ENCODE measurements at regions of chr20 and their contacts with region 1.

Region 1: DNA sequence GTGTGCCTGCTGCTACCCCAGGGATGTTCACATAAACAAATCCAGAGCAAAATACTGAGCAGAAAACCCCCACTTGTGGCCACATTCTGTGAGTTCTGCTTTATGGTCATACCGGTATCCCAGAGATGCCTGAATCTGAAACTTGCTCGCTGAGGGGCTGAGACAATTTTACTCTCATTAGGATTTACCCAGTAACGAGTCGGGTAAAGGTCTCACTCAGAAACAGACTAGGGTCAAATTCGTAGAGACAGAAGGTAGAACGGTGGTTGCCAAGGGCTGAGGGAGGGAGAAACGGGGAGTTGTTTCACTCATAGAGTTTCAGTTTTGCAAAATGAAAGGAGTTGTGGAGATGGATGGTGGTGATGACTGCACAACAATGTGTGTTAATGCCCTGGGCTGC is 45.4 kb upstream of the NKX2-2 start:
- DNase-seq: peak in 2 of 14 experiments; percentile 14 to 37
- ATAC-seq: no peak
- H3K4me3 ChIP-seq: peak overlapping the region; percentile 25
- H3K4me3 Mint-ChIP-seq: peak overlapping the region; percentile 31
- H3K27ac ChIP-seq: no peak overlapping the region
- H3K27ac Mint-ChIP-seq: peak overlapping the region; percentile 46
- H3K4me1 ChIP-seq: peaks cover 33% of the 10 kb centered on the region
- H3K4me1 Mint-ChIP-seq: peaks cover 48% of the 10 kb centered on the region
- H3K27me3 ChIP-seq: no peaks in the 10 kb centered on the region
- H3K27me3 Mint-ChIP-seq: peaks cover 13% of the 10 kb centered on the region
- CTCF ChIP-seq: no peak

Region 2: DNA sequence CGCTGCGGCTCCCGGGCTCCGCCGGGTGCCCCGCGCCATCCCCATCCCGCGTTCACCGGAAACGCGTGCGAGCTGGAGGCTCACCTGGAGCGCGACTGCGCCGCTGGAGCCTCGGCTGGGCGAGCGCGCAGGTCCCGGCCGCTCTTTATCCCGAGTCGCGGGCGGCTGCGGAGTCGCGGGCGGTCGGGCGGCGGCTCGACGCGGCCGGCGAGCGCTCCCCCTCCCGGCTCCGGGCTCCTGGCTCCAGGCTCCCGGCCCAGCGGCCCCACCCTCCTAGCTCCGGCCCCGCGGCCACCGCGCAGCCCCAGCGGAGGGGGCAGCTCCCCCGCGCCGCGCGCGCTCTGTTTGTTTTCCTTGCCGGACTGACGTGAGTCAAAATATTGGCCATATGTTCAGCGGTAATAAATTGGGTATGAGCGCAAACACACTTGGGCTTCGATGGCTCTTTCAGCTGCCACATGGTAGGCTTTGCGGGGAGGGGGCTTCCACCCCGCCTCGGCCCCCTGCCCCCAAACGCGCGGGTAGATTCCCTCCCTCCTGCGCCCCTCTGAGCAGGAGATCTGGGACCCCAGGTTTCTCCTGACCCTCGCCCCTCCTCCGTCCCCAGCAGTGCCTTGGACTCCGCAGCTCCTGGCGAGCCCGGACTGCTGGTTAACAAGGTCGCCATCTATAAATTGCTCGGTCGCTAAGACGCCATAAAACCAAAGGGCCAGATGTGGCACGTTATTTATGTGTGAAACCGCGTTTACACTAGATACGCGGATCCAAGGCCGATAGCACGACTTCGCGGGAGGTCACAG is 36.6 kb before region 1 on chr20:
- CTCF ChIA-PET with region 1: no interaction called
- POLR2A ChIA-PET with region 1: no interaction called
- intact Hi-C with region 1: no loop called
- DNase-seq: no peak
- ATAC-seq: no peak
- H3K4me3 ChIP-seq: no peak overlapping the region
- H3K4me3 Mint-ChIP-seq: peak overlapping the region; percentile 54
- H3K27ac ChIP-seq: no peak overlapping the region
- H3K27ac Mint-ChIP-seq: no peak overlapping the region
- H3K4me1 ChIP-seq: peaks cover 33% of the 10 kb centered on the region
- H3K4me1 Mint-ChIP-seq: peaks cover 26% of the 10 kb centered on the region
- H3K27me3 ChIP-seq: peaks cover 70 to 89% of the 10 kb centered on the region in 2 experiments
- H3K27me3 Mint-ChIP-seq: peaks cover 90% of the 10 kb centered on the region
- CTCF ChIP-seq: no peak

Region 3: GRCh38 chr20:21548390-21549035 is 10.8 kb before region 1 on chr20:
- CTCF ChIA-PET with region 1: no interaction called
- POLR2A ChIA-PET with region 1: interaction called, 24 read pairs
- intact Hi-C with region 1: no loop called
- DNase-seq: peak in 10 of 14 experiments; percentile 10 to 89 (median 48)
- ATAC-seq: peak; percentile 87
- H3K4me3 ChIP-seq: peak overlapping the region; percentile 15
- H3K4me3 Mint-ChIP-seq: peak overlapping the region; percentile 58
- H3K27ac ChIP-seq: peak overlapping the region; percentile 20 to 60
- H3K27ac Mint-ChIP-seq: peak overlapping the region; percentile 90
- H3K4me1 ChIP-seq: peaks cover 27% of the 10 kb centered on the region
- H3K4me1 Mint-ChIP-seq: peaks cover 41% of the 10 kb centered on the region
- H3K27me3 ChIP-seq: no peaks in the 10 kb centered on the region
- H3K27me3 Mint-ChIP-seq: no peaks in the 10 kb centered on the region
- CTCF ChIP-seq: no peak

Region 4: DNA sequence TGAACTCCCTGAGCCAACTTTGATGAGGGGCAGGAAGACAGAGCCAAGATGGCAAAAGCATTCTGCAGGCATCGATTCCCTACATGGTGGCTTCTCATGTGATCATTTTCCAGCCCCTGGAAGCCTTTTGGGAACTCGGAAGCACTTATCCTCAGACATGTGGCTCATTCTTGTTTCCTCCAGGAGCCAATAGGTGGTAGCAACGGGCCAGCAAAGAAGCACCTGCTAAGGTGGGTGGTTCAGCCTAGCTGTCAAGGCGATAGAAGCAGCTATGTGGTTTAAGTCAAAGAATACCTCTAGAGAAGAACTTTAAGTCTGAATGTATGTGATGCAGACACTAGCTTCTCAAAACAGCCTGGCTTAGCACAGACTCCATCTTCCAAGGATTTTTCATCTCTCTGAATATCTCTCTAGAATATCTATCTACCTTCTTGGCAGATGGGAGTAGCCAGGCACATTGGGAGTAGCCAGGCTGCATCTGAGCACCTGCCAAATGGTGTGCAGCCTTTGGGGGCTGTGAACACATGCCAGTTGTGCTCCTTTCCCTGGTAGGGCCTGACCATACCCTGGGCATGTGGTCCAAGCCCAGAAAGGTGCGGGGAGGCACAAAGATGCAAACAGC is 81.4 kb after region 1 on chr20:
- CTCF ChIA-PET with region 1: no interaction called
- POLR2A ChIA-PET with region 1: no interaction called
- intact Hi-C with region 1: no loop called
- DNase-seq: no peak
- ATAC-seq: no peak
- H3K4me3 ChIP-seq: no peak overlapping the region
- H3K4me3 Mint-ChIP-seq: no peak overlapping the region
- H3K27ac ChIP-seq: no peak overlapping the region
- H3K27ac Mint-ChIP-seq: no peak overlapping the region
- H3K4me1 ChIP-seq: no peaks in the 10 kb centered on the region
- H3K4me1 Mint-ChIP-seq: no peaks in the 10 kb centered on the region
- H3K27me3 ChIP-seq: peaks cover 0 to 6% of the 10 kb centered on the region in 2 experiments
- H3K27me3 Mint-ChIP-seq: peaks cover 33% of the 10 kb centered on the region
- CTCF ChIP-seq: no peak